ENCODE measurements at regions of chr11 and their contacts with region 1.

Region 1: DNA sequence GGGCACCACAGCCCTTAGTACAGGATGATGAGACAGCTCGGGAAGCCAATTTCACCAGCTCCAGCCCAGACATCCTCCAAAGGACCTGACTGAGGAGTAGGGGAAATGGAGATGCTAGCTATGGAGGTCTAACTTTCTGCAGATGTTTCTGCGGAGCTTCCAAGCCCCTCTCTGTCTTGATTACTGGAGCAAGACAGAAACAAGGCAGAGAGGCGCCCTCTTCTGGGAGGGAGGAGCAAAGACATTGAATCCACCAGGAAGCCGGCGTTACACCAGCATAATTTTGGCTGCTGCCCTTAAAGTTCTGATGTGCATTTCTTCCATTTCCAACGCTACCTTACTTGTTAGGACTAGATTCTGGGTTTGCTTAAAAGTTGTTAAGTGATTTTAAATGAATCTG is 107.3 kb upstream of the HSD17B12 start:
- H3K4me3 ChIP-seq: no peak overlapping the region
- H3K27ac ChIP-seq: no peak overlapping the region
- H3K4me1 ChIP-seq: peaks cover 3% of the 10 kb centered on the region; the same call in 1 of the 2 replicates
- CTCF ChIP-seq: no peak

Region 2: DNA sequence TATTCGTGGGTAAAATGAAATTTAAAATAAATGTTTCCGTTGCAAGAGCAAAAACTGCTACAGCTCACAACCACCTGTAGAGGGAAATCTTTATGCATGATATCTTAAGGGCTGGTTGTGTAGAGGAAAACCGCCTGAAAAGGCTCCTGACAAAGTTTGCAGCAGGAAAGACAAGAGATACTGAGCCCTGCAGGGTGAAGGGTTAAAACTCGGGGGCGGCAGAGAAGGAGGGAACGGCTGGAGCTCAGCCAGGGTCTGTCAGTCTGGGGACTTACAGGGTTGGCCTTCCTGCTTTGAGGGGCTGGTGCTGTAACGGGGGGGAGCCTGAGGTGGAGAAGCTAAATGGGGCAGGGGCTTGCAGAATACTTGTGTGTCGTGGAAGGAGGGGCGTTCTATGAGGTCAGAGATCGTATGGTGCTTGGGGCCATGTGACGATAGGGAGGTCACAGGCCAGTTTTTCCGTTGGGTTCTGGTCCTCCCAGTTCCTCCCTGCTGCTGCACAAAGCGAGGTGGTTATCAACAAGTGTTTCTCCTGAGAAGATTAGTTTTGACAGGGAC is 15.6 kb before region 1 on chr11:
- CTCF ChIA-PET with region 1: interaction called, 11 read pairs
- POLR2A ChIA-PET with region 1: no interaction called
- H3K4me3 ChIP-seq: no peak overlapping the region
- H3K27ac ChIP-seq: no peak overlapping the region
- H3K4me1 ChIP-seq: no peaks in the 10 kb centered on the region
- CTCF ChIP-seq: no peak

Measured in HEK293 (cell line).